Right cardiac atrium (tissue), 5 donors: ENCODE measurements at regions of chr7 and their contacts with region 1.

Region 1: DNA sequence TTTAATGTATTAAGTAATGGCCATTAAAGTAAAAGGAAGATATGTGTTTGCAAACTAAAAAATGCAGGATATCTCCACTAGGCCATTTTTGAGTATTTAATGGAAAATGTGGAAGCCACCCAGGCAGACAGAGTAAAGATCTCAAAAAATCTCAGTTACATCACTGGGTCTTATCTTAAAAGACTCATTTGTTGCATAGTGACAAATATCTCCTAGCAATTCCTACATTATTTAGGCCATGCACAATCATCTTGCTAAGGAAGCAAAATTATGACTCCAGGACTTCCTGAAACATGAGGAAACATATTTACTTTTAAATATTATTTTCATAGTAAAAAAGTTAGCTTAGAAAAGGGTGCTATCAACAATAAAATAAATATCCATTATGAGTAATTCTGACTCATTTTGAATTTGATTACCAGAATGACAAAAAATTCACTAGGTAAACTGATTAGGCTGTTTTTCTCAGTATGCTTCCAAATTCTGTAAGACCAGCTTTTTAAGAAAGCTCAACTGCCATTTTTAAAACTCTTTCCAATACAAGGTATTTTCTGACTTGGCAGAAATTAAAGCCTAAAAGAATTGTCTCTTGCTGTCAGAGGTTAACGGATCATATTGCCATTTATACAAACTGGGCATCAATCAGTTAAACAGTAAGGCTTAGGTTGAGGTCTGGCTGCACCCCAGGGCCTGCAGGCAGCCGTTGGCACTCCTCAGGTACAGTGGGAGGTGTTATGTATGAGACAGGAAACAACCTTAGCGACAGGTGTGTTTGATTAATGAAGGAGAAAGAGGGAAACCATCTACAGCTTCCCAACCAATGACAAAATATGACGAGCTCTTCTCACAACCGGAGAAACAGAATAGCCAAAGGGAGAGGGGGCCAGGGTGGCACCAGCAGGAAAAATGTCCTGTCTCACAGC is 31.8 kb downstream of the PCLO start:
- DNase-seq: no peak
- ATAC-seq: no peak
- H3K4me3 ChIP-seq: no peak overlapping the region
- H3K27ac ChIP-seq: no peak overlapping the region
- H3K4me1 ChIP-seq: no peaks in the 10 kb centered on the region
- H3K27me3 ChIP-seq: no peaks in the 10 kb centered on the region

Region 2: GRCh38 chr7:83040484-83040883 is 90.4 kb before region 1 on chr7:
- intact Hi-C with region 1: loop called in 1 of 4 experiments (anchors 10 kb)
- DNase-seq: no peak
- ATAC-seq: no peak
- H3K4me3 ChIP-seq: no peak overlapping the region
- H3K27ac ChIP-seq: no peak overlapping the region
- H3K4me1 ChIP-seq: no peaks in the 10 kb centered on the region
- H3K27me3 ChIP-seq: no peaks in the 10 kb centered on the region